Naive thymus-derived CD8-positive, alpha-beta T cell (primary cell): ENCODE measurements at regions of chr3 and their contacts with region 1.

Region 1: DNA sequence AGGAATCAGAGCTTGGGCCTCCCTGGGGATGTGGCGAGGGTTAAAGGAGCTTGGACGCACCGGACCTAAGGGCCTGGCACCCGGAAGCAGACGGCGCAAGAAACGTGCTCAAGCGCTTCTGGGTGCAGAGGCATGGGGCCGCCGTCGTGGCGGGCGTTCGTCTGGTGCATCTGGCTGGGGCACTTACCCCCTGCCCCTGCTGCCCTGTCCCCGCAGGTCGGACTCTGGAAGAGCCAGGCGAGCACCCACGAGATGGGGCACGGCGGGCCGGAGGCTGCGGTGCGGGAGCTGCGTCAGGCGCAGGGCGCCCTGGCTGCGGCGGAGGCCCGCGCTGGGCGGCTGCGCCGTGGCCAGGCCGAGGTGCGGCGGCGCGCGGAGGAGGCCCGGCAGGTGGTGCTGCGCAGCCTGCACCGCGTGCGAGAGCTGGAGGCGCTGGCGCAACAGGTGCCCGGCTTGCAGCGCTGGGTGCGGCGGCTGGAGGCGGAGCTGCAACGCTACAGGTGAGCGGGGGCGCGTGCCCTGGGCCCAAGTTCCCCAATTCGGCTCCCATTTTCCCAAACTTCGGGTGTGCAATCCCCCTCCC is 2.6 kb downstream of the EFCC1 start:
- DNase-seq: peak; percentile 32 to 75 (median 57)
- ATAC-seq: peak; percentile 80 to 90
- H3K4me3 Mint-ChIP-seq: peak overlapping the region in 9 of 10 donors; percentile 48 to 91 (median 74)
- H3K27ac Mint-ChIP-seq: no peak overlapping the region
- H3K4me1 Mint-ChIP-seq: peaks cover 22 to 59% (median 53%) of the 10 kb centered on the region in 4 donors
- H3K27me3 Mint-ChIP-seq: peaks cover 8 to 23% (median 17%) of the 10 kb centered on the region in 5 donors

Region 2: DNA sequence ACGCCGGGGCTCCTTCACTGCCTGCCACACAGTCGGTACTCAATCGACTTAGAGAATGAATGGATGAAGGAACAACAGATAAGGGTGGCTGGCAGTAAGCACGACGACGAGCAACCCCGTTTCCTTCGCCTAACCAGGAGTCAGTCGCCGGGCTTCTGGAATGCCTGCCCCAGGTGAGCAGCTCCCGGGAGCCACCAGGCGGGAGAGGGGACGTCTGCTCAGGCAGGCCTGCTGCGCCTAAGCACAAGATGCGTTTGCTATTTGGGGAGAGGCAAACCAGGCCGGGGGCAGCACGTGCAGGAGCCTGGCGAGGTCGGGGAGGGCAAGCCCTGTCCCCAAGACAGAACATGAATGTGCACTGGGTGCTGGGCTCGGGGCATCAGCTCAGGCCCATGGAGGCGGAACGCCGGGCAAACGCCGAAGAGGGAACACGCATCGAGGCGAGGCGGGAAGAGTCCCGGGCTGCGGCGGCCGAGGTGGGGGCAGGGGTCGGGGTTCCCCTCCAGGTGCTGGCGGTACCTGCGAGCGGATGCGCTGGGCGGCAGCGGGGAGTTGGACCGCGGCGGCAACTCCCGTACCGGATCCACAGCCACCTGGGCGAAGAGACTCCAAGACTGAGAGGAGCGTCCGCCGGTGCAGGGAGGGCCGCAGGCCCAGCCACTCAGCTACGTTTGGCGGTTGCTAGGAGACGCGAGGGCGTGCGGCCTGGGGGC is 10.1 kb before region 1 on chr3 and contains the start of gene CFAP92:
- POLR2A ChIA-PET with region 1: interaction called, 29 read pairs
- DNase-seq: peak; percentile 84 to 95 (median 90)
- ATAC-seq: peak; percentile 94 to 95
- H3K4me3 Mint-ChIP-seq: peak within 1 kb of the TSS; percentile 68 to 90 (median 84)
- H3K27ac Mint-ChIP-seq: peak within 1 kb of the TSS; percentile 60 to 94 (median 88)
- H3K4me1 Mint-ChIP-seq: peaks cover 23 to 39% (median 36%) of the 10 kb centered on the region in 4 donors
- H3K27me3 Mint-ChIP-seq: peaks cover 0 to 4% (median 0%) of the 10 kb centered on the region in 5 donors
- polyA plus RNA-seq, gene CFAP92: 0.18 to 0.23 (median 0.20) TPM

Region 3: DNA sequence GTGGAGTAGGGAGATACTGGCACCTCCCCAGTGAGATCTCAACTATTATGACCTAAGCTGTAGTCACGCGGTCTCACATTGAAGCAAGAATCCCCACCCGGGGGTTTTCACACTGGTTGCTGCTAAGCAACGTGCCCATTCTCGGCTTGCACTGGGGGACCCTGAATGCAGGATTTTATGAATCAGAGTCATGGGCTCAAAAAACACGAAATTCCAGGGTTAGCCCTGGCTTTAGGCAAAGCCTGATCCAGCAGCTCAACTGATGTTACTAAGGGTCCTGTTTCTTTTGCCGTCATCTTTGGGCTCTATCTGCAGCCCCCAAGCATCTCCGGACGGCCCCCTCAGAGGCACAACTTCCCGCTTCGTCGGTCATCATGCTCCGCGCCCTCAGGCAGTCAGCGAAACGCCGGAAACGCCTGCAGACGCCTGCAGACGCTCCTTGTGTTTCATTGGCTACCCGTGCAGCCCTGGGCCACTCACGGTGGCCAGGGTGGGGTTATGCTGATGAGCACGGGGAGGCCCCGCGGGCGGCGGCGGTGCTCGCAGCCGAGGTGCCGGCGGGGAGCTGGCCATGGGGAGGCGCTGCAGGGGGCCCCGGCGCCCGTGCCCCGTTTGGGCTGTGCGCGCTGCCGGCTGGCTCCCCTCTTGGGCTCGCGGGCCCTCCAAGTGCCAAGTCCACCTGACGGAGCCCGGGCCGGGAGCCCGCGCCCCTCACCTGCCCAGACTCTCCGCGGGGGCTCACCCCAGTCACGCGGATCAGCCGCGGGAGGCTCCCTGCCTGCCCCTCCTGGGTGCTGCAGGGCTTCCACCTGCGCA is 23.3 kb after region 1 on chr3:
- POLR2A ChIA-PET with region 1: interaction called, 11 read pairs
- DNase-seq: peak; percentile 87 to 96 (median 92)
- ATAC-seq: peak; percentile 97
- H3K4me3 Mint-ChIP-seq: peak overlapping the region; percentile 84 to 94 (median 90)
- H3K27ac Mint-ChIP-seq: peak overlapping the region; percentile 92 to 99 (median 98)
- H3K4me1 Mint-ChIP-seq: peaks cover 16 to 32% (median 30%) of the 10 kb centered on the region in 4 donors
- H3K27me3 Mint-ChIP-seq: no peaks in the 10 kb centered on the region